Activated CD4-positive, alpha-beta T cell treated with anti-CD3 and anti-CD28 coated beads for 36 hours (primary cell): ENCODE measurements at regions of chr22 and their contacts with region 1.

Region 1: GRCh38 chr22:39117585-39118191 is 20.6 kb downstream of the APOBEC3H start:
- DNase-seq: peak; percentile 84
- ATAC-seq: peak; percentile 60
- H3K4me3 Mint-ChIP-seq: peak overlapping the region; percentile 10
- H3K27ac Mint-ChIP-seq: peak overlapping the region; percentile 86
- H3K4me1 Mint-ChIP-seq: peaks cover 54% of the 10 kb centered on the region
- H3K27me3 Mint-ChIP-seq: no peaks in the 10 kb centered on the region

Region 2: GRCh38 chr22:38953577-38954413 is 163.9 kb before region 1 on chr22:
- CTCF ChIA-PET with region 1: interaction called, 3 read pairs
- POLR2A ChIA-PET with region 1: no interaction called
- intact Hi-C with region 1: loop called in 1 of 2 experiments (anchors 1 kb)
- DNase-seq: peak; percentile 90
- ATAC-seq: peak; percentile 95
- H3K4me3 Mint-ChIP-seq: peak overlapping the region; percentile 60
- H3K27ac Mint-ChIP-seq: peak overlapping the region; percentile 93
- H3K4me1 Mint-ChIP-seq: peaks cover 24% of the 10 kb centered on the region
- H3K27me3 Mint-ChIP-seq: peaks cover 8% of the 10 kb centered on the region

Region 3: DNA sequence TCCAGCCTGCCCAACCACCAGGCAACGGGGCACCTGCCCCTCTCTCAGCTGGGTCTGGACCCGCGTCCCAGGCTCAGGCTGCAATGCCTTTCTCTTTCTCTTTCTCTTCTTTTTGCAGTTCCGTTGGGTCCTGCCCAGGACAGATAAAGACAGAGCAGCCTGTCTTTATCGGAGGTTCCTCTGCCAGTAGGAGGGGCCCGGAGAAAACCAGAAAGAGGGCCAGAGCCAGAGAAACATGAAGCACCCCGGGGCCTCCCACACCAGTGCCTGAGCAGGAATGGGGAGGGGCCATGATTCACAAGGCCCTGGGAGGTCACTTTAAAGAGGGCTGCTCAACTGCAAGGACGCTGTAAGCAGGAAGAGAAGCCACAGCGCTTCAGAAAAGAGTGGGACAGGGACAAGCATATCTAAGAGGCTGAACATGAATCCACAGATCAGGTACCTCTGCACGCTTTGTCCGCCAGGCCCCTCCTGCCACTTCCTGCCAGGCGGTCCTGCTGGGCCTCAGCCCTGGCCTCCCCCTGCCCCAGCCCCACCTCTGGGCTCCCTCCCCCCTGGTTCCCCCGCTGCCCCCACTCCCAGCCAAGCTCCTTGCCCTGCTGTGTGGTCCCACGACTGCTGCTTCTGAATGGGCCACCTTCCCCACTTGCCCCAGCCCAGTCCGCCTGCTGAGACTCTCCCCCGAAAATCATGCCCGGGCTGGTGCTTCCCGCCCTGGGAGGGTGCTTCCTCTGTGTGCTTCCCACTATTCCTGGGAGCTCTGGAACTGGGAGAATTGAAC is 103.6 kb before region 1 on chr22 and contains the start of gene APOBEC3C:
- CTCF ChIA-PET with region 1: interaction called, 4 read pairs
- POLR2A ChIA-PET with region 1: no interaction called
- intact Hi-C with region 1: loop called (anchors 2 kb)
- DNase-seq: peak; percentile 89
- ATAC-seq: peak; percentile 96
- H3K4me3 Mint-ChIP-seq: peak within 1 kb of the TSS; percentile 93
- H3K27ac Mint-ChIP-seq: peak within 1 kb of the TSS; percentile 95
- H3K4me1 Mint-ChIP-seq: peaks cover 33% of the 10 kb centered on the region
- H3K27me3 Mint-ChIP-seq: no peaks in the 10 kb centered on the region
- total RNA-seq, gene APOBEC3C: 75.3 to 98.5 TPM

Region 4: DNA sequence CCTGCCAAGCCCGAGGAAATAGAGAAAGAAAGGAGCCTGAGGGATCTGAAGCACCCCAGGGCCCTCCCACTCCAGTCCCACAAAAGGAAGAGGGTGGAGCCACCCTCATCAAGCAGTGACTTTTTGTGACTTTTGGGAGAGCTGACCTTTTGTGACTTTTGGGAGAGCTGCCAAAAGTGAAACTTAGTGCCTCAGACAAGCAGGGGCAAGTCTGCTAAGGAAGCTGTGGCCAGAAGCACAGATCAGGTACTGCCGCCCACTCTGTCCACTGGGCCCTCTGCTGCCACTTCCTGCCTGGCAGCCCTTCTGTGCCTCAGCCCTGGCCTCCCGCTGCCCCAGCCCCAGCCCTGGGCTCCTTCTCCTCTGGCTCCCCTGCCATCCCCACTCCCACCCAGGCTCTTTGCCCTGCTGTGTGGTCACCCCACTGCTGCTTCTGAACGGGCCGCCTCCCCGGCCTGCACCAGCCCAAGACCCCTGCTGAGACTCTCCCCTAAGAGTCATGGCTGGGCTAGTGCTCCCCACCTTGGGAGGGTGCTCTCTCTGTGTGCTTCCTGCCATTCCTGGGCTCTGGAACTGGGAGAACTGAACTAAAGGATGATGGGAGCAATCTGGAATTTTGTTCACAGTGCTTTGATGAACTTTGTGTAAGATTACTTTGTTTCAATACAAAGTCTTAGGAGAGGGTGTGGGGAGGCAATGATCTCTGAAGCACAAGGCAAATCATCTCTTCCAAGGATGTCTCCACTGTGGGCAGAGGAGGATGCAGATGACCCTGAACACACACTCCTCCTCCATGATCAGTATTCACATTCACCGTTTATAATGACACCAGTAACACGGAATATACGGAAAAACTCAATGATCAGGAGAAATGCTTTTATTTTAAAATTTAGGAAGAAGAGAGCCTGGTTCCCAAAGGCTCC is 20.3 kb before region 1 on chr22 and contains the start of gene APOBEC3H:
- CTCF ChIA-PET with region 1: interaction called, 4 read pairs
- POLR2A ChIA-PET with region 1: no interaction called
- intact Hi-C with region 1: loop called (anchors 1 to 2 kb)
- DNase-seq: peak; percentile 30
- ATAC-seq: no peak
- H3K4me3 Mint-ChIP-seq: peak within 1 kb of the TSS; percentile 34
- H3K27ac Mint-ChIP-seq: peak within 1 kb of the TSS; percentile 84
- H3K4me1 Mint-ChIP-seq: peaks cover 74% of the 10 kb centered on the region
- H3K27me3 Mint-ChIP-seq: no peaks in the 10 kb centered on the region
- total RNA-seq, gene APOBEC3H: 5.2 to 7.3 TPM

Region 5: GRCh38 chr22:39266398-39267030 is 148.8 kb after region 1 on chr22:
- CTCF ChIA-PET with region 1: no interaction called
- POLR2A ChIA-PET with region 1: no interaction called
- intact Hi-C with region 1: no loop called
- DNase-seq: peak; percentile 79
- ATAC-seq: peak; percentile 96
- H3K4me3 Mint-ChIP-seq: no peak overlapping the region
- H3K27ac Mint-ChIP-seq: peak overlapping the region; percentile 78
- H3K4me1 Mint-ChIP-seq: peaks cover 18% of the 10 kb centered on the region
- H3K27me3 Mint-ChIP-seq: peaks cover 7% of the 10 kb centered on the region